HepG2 (cell line): ENCODE measurements at regions of chr2 and their contacts with region 1.

Region 1: GRCh38 chr2:215749092-215749957 is 264.0 kb downstream of the MREG start:
- DNase-seq: peak; percentile 91
- ATAC-seq: peak; percentile 92
- H3K4me3 ChIP-seq: no peak overlapping the region
- H3K27ac ChIP-seq: peak overlapping the region; percentile 79
- H3K4me1 ChIP-seq: peaks cover 86% of the 10 kb centered on the region
- H3K27me3 ChIP-seq: no peaks in the 10 kb centered on the region
- CTCF ChIP-seq: peak; percentile 25; the same call in 1 of the 2 replicates
- EP300 ChIP-seq: peak in 1 of 2 experiments; percentile 97; a peak in 2 of 4 replicates
- POLR2A ChIP-seq: peak; percentile 26 to 49; a peak in 2 of 4 replicates
- RAD21 ChIP-seq: 0 out of 2 replicates have a peak, but pooled peaks have one; percentile 37

Region 2: GRCh38 chr2:215693193-215693998 is 55.9 kb before region 1 on chr2:
- CTCF ChIA-PET with region 1: no interaction called
- POLR2A ChIA-PET with region 1: interaction called, 37 read pairs
- in situ Hi-C with region 1: no loop called
- intact Hi-C with region 1: loop called (anchors 5 kb)
- DNase-seq: peak; percentile 93
- ATAC-seq: peak; percentile 92
- H3K4me3 ChIP-seq: peak overlapping the region in 1 of 3 experiments; percentile 13; a peak in 1 of 6 replicates
- H3K27ac ChIP-seq: peak overlapping the region; percentile 80
- H3K4me1 ChIP-seq: peaks cover 47% of the 10 kb centered on the region
- H3K27me3 ChIP-seq: no peaks in the 10 kb centered on the region
- CTCF ChIP-seq: no peak
- EP300 ChIP-seq: peak in 1 of 2 experiments; percentile 96; a peak in 2 of 4 replicates
- POLR2A ChIP-seq: peak in 1 of 2 experiments; percentile 47; a peak in 1 of 4 replicates
- RAD21 ChIP-seq: no peak

Region 3: DNA sequence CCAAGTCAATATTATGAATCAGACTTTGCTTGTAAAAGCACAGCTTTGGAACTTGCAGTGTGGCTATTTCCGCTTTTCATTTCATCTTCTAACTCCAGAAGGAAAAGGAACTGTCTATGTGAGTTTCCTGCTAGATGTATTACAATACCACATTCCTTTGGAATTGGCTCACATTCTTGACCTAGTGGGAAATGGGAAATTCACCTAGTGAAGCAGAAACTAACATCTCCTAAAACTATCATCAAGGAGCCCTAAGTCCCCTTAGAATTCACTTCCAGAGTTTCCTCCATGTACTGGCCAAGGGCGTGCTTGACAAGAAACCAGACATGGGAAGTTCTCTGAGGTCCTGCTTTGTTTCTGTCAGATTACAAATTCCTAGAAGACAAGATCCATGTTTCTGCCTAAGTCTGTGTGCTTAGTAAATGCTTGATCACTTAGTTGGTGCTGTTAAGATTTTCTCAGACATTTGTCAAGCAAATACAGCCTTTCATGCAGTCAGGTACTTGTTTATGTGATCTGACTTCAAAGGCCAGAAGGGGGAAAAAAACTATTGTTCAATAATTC is 37.8 kb before region 1 on chr2:
- CTCF ChIA-PET with region 1: no interaction called
- POLR2A ChIA-PET with region 1: interaction called, 25 read pairs
- in situ Hi-C with region 1: no loop called
- intact Hi-C with region 1: no loop called
- DNase-seq: peak; percentile 72
- ATAC-seq: peak; percentile 42
- H3K4me3 ChIP-seq: no peak overlapping the region
- H3K27ac ChIP-seq: peak overlapping the region; percentile 64
- H3K4me1 ChIP-seq: peaks cover 58% of the 10 kb centered on the region
- H3K27me3 ChIP-seq: no peaks in the 10 kb centered on the region
- CTCF ChIP-seq: no peak
- EP300 ChIP-seq: peak in 1 of 2 experiments; percentile 61; a peak in 2 of 4 replicates
- POLR2A ChIP-seq: no peak
- RAD21 ChIP-seq: no peak

Region 4: GRCh38 chr2:215727507-215728503 is 21.5 kb before region 1 on chr2:
- CTCF ChIA-PET with region 1: no interaction called
- POLR2A ChIA-PET with region 1: interaction called, 10 read pairs
- in situ Hi-C with region 1: no loop called
- intact Hi-C with region 1: no loop called
- DNase-seq: peak; percentile 85
- ATAC-seq: peak; percentile 98
- H3K4me3 ChIP-seq: no peak overlapping the region
- H3K27ac ChIP-seq: peak overlapping the region; percentile 23
- H3K4me1 ChIP-seq: peaks cover 42% of the 10 kb centered on the region
- H3K27me3 ChIP-seq: no peaks in the 10 kb centered on the region
- CTCF ChIP-seq: no peak
- EP300 ChIP-seq: peak in 1 of 2 experiments; percentile 78; a peak in 2 of 4 replicates
- POLR2A ChIP-seq: no peak
- RAD21 ChIP-seq: no peak

Region 5: DNA sequence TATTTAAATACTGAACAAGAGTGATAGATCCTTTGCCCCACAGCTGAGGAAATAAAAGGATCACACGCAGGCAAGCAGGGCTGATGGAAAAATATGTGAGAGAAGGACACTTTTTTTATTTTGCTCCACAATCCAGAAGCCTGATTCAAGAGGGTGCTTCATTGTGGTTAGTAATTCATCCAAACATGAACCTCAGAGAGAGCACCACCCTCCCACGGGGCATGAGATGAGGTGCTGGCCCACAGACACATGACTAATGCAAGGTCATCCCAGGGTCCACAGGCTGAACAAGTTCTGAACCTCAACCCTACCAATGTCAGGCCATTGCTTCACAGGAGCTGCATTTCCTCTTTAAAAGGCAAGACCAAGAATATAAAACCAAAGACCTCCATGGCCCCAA is 24.4 kb after region 1 on chr2:
- CTCF ChIA-PET with region 1: no interaction called
- POLR2A ChIA-PET with region 1: interaction called, 12 read pairs
- in situ Hi-C with region 1: no loop called
- intact Hi-C with region 1: loop called (anchors 2 kb)
- DNase-seq: peak; percentile 41
- ATAC-seq: peak; percentile 73
- H3K4me3 ChIP-seq: no peak overlapping the region
- H3K27ac ChIP-seq: no peak overlapping the region
- H3K4me1 ChIP-seq: peaks cover 45% of the 10 kb centered on the region
- H3K27me3 ChIP-seq: no peaks in the 10 kb centered on the region
- CTCF ChIP-seq: no peak
- EP300 ChIP-seq: 0 out of 4 replicates have a peak, but pooled peaks of 1 of the 2 experiments have one; percentile 34
- POLR2A ChIP-seq: no peak
- RAD21 ChIP-seq: no peak